ENCODE measurements at regions of chr14 and their contacts with region 1.

Region 1: GRCh38 chr14:74881431-74882361 is at the start of gene DLST:
- DNase-seq: peak; percentile 88
- ATAC-seq: peak; percentile 86
- H3K4me3 Mint-ChIP-seq: peak within 1 kb of the TSS; percentile 99
- H3K27ac Mint-ChIP-seq: peak within 1 kb of the TSS; percentile 97
- H3K4me1 Mint-ChIP-seq: peaks cover 51% of the 10 kb centered on the region
- H3K27me3 Mint-ChIP-seq: no peaks in the 10 kb centered on the region
- CTCF ChIP-seq: no peak
- total RNA-seq, gene DLST: 73.1 and 90.4 TPM in 2 replicates

Region 2: DNA sequence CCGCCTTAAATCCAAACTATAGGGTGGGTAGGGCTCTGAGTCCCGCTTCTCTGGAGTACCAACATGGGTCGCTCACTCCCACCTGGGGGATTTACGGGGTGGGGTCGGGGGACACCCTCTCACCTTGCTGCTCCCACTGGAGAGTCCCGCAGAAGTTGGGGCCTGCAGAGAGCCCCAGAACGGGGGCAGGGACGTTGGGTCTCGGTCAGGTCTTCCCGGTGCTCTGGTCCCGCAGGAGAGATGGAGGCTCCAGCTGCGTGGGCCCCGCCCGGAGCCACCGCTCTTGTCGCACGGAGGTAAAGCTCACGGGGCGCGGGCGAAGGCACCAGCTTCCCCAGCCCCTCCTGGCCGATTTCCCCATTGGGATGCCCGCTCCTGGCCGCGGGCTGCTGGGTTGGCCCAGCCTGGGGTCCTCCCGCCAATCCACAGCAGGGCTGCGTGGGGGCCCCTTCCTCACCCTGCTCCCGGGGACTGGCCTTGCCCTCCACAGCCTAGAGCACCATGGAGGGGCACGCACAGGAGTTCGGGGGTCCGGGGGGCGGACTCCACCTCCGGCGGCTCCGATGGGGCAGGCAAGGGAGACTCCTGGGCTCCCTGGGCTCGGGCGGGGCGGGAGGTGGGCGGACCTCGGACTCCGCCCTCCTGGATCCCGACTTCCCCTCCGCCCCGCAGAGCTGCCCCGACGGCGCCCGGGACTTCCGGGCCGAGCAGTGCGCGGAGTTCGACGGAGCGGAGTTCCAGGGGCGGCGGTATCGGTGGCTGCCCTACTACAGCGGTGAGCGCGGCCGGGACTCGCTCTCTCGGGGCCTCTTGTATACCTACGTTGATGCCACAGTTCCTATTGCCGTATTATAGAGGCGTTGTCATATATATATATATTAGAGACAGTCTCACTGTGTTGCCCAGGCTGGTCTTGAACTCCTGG is 1636.0 kb before region 1 on chr14:
- CTCF ChIA-PET with region 1: no interaction called
- POLR2A ChIA-PET with region 1: interaction called, 11 read pairs
- intact Hi-C with region 1: no loop called
- DNase-seq: peak; percentile 65
- ATAC-seq: peak; percentile 87
- H3K4me3 Mint-ChIP-seq: peak overlapping the region; percentile 81
- H3K27ac Mint-ChIP-seq: peak overlapping the region; percentile 30
- H3K4me1 Mint-ChIP-seq: peaks cover 67% of the 10 kb centered on the region
- H3K27me3 Mint-ChIP-seq: peaks cover 15% of the 10 kb centered on the region
- CTCF ChIP-seq: no peak

Region 3: DNA sequence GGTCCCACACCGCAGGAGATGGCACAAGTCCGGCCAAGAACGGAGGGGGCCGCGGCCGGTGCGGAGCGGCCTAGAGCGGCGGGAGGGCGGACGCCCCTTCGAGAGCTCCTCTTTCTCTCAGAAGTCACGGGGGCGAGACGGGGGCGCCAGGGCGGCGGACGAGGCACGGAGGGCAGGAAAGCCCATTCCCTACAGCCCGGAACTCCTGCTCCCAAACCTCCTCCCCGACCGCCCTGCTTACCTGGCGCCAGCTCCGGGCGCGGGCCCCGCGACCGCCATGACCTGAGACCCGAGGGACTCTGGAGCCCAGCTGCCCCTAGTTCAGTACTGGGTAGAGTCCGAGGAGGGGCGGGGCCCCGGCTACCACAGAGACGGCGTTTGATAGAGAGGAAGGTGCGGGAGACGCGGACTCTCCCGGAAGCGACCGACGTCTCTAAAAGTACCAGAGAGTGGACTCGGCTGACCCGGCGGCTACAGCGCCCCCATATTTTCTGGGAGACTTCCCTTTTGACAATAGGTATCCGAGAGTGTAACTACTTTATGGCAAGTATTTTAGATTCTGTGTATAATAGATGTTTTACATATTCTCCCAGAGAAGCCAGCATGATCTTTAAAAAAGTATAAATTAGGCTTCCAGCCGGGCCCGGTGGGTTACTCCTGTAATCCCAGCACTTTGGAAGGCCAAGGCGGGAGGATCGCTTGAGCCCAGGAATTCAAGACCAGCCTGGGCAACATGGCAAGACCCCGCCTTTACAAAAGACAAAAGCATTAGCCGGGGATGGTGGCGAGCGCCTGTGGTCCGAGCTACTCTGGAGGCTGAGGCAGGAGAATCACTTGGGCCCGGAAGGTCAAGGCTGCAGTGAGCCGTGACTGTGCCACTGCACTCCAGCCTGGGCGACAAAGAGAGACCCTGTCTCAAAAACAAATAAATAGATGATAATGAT is 578.8 kb before region 1 on chr14 and contains the start of gene ABCD4:
- CTCF ChIA-PET with region 1: no interaction called
- POLR2A ChIA-PET with region 1: no interaction called
- intact Hi-C with region 1: loop called (anchors 1 kb)
- DNase-seq: peak; percentile 84
- ATAC-seq: peak; percentile 97
- H3K4me3 Mint-ChIP-seq: peak within 1 kb of the TSS; percentile 96
- H3K27ac Mint-ChIP-seq: peak within 1 kb of the TSS; percentile 94
- H3K4me1 Mint-ChIP-seq: peaks cover 26% of the 10 kb centered on the region
- H3K27me3 Mint-ChIP-seq: no peaks in the 10 kb centered on the region
- CTCF ChIP-seq: no peak
- total RNA-seq, gene ABCD4: 58.2 and 78.4 TPM in 2 replicates

Region 4: DNA sequence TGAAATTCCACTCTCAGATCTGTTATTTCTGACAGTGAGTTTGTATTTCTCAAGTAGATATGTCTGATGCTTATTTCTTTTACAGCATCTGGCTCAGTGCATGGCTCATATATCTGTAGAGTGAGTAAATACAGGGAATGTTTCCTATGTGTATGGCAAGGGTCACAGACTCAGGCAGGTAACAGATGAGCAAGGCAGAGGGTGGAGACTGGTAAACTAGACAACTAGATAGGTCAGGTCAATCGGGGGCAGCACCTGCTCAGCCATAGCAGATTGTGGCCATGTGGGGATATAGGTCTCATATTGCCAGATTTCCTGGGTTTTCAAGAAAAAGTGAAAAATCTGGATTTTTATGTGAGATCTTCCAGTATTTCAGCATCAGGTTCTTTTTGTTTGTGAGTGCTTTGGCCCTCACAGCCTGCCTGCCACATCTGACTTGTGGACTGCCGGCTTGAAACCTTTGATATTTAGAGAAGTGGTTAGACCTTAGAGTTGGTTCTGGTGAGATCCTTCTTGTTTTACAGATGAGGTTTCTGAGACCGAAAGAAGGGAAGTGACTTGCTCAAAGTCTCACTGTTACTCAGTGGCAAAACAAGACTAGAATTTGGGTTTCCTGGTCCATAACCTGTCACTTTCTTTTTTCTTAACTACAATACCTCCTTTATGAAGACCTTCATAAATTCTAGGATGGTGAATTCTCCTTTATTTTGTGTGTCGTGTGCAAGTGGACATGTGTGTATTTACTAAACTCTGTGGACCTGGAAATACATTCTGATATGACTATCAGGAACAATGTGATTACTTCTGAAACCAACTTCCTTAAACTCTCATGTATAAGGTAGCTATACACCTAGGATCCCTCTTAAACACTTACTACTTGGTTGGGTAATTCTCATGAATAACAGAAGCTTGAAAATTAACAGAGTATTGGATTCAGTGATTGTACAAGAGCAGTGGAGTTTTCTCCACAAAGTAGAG is 40.2 kb before region 1 on chr14:
- CTCF ChIA-PET with region 1: no interaction called
- POLR2A ChIA-PET with region 1: interaction called, 13 read pairs
- intact Hi-C with region 1: loop called (anchors 2 kb)
- DNase-seq: no peak
- ATAC-seq: peak; percentile 84
- H3K4me3 Mint-ChIP-seq: peak overlapping the region; percentile 63
- H3K27ac Mint-ChIP-seq: peak overlapping the region; percentile 93
- H3K4me1 Mint-ChIP-seq: peaks cover 59% of the 10 kb centered on the region
- H3K27me3 Mint-ChIP-seq: no peaks in the 10 kb centered on the region
- CTCF ChIP-seq: no peak

Region 5: GRCh38 chr14:74922739-74923401 is 41.2 kb after region 1 on chr14 and contains the start of gene RPS6KL1:
- CTCF ChIA-PET with region 1: no interaction called
- POLR2A ChIA-PET with region 1: no interaction called
- intact Hi-C with region 1: loop called (anchors 1 kb)
- DNase-seq: peak; percentile 59
- ATAC-seq: peak; percentile 98
- H3K4me3 Mint-ChIP-seq: peak within 1 kb of the TSS; percentile 69
- H3K27ac Mint-ChIP-seq: no peak within 1 kb of the TSS
- H3K4me1 Mint-ChIP-seq: peaks cover 8% of the 10 kb centered on the region
- H3K27me3 Mint-ChIP-seq: peaks cover 2% of the 10 kb centered on the region
- CTCF ChIP-seq: no peak
- total RNA-seq, gene RPS6KL1: 5.2 and 7.0 TPM in 2 replicates